Naive thymus-derived CD4-positive, alpha-beta T cell (primary cell): ENCODE measurements at regions of chr5 and their contacts with region 1.

Region 1: DNA sequence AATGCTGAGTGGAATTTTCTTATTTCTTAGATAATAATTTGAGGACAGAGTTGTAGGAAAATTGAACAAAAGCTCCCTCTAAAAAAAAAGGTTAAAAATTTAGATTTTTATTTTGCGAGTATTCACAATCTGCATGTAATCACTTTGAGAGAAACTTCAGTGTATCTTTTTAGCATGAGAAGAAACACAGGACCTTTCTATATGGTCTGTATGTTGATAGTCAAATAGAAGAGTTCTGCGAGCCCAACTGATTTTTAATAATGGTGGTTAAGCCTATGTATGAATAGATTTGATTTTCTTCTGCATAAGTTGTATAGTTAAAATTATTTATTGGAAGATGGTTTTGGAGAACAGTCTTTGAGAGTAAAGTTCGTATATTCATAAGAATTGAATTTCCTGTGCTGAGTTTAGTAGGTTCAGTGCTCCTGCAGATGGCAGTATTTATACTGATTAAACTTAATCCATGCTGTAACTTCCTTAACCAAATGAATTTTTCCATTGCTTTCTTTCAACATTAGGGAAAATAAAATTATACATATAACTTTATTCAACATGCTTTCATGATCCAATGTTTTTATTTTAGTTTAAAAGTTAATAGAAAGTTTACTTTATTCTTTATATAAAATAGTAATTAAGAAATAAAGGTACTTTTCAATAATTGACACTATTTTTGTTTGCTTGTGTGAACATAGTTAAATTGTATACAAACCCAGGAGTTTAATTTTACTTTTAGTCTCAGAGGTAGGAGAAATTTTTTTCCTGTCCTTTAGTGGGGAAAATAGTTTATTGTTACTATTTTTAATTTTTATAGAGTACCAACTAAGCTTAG is 19.6 kb downstream of the TCERG1 start:
- DNase-seq: no peak
- ATAC-seq: no peak
- H3K4me3 ChIP-seq: no peak overlapping the region
- H3K4me3 Mint-ChIP-seq: no peak overlapping the region
- H3K27ac ChIP-seq: no peak overlapping the region
- H3K27ac Mint-ChIP-seq: peak overlapping the region in 4 of 9 donors; percentile 19 to 60 (median 53)
- H3K4me1 ChIP-seq: no peaks in the 10 kb centered on the region
- H3K4me1 Mint-ChIP-seq: peaks cover 12 to 37% (median 24%) of the 10 kb centered on the region in 7 donors
- H3K27me3 ChIP-seq: no peaks in the 10 kb centered on the region
- H3K27me3 Mint-ChIP-seq: no peaks in the 10 kb centered on the region

Region 2: DNA sequence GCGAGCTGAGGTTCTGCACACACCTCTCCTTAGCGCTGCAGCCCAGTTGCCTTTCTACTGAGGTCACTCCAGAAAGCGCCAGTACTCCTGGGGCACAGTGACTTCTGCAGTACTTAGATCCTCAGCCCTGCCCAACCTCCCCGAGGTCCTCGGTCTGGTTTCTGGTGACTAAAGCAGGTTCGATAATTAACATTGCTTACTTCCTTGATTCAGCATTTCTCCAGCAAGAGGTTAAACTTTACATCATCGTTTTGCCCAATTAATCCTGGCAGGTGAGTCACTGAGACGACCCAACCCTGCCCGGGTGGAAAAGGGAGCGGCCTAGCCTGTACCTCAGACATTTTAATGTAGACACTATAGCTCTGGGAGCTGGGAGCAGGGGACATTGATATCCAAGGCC is 439.0 kb before region 1 on chr5:
- CTCF ChIA-PET with region 1: no interaction called
- POLR2A ChIA-PET with region 1: no interaction called
- intact Hi-C with region 1: no loop called
- DNase-seq: no peak
- ATAC-seq: no peak
- H3K4me3 ChIP-seq: no peak overlapping the region
- H3K4me3 Mint-ChIP-seq: no peak overlapping the region
- H3K27ac ChIP-seq: no peak overlapping the region
- H3K27ac Mint-ChIP-seq: no peak overlapping the region
- H3K4me1 ChIP-seq: no peaks in the 10 kb centered on the region
- H3K4me1 Mint-ChIP-seq: no peaks in the 10 kb centered on the region
- H3K27me3 ChIP-seq: no peaks in the 10 kb centered on the region
- H3K27me3 Mint-ChIP-seq: peaks cover 4 to 22% (median 10%) of the 10 kb centered on the region in 5 donors

Region 3: DNA sequence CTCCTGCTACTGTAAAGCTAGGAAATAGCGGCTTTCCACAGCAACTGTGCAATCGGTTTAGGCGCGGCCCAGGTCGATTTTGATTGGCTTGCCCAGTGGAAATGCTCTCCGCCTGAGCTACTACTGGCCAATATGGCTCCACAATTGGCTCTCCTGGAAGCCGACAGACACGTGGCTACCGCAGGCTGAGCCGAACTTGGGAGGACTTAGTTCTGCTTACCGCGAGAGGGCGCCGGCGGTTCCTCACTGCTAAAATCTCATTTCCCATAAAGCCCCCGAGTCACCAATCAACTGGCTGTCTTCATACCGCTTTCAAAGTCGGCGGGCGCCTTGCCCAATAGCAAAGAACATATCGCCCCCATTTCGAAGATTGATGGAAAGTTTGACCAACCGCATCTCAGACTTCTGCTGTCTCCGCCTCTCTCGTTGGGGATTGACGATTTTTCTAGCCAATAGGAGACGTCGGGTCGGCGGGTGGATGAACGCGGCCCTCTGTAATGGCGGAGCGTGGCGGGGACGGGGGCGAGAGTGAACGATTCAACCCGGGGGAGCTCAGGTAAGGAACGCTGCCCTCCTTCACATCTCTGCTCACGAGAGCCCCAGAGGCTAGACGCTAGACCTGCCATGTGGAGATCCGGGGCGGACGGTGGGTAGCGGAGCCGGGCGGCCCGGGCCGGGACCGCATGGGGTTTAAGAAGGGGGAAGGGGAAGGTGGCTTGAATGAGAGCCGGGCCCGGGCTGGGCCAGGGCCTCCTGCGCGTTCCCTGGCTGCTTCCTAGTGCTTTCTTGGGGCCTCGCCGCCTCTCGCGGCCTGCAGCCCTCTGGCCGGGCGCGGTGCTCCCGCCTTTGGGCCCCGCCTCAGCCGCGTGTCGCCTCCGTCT is 19.6 kb before region 1 on chr5 and contains the start of gene TCERG1:
- CTCF ChIA-PET with region 1: interaction called, 3 read pairs
- POLR2A ChIA-PET with region 1: interaction called, 3 read pairs
- intact Hi-C with region 1: loop called (anchors 2 kb)
- DNase-seq: peak; percentile 87 to 99 (median 98)
- ATAC-seq: peak; percentile 94
- H3K4me3 ChIP-seq: peak within 1 kb of the TSS; percentile 64
- H3K4me3 Mint-ChIP-seq: peak within 1 kb of the TSS; percentile 83 to 100 (median 99)
- H3K27ac ChIP-seq: peak within 1 kb of the TSS; percentile 96
- H3K27ac Mint-ChIP-seq: peak within 1 kb of the TSS; percentile 91 to 100 (median 97)
- H3K4me1 ChIP-seq: peaks cover 14 to 19% of the 10 kb centered on the region in 2 donors
- H3K4me1 Mint-ChIP-seq: peaks cover 24 to 51% (median 43%) of the 10 kb centered on the region in 7 donors
- H3K27me3 ChIP-seq: no peaks in the 10 kb centered on the region
- H3K27me3 Mint-ChIP-seq: peaks cover 0 to 10% (median 0%) of the 10 kb centered on the region in 5 donors
- total RNA-seq, gene TCERG1: 75.2 to 101 (median 83.8) TPM

Region 4: DNA sequence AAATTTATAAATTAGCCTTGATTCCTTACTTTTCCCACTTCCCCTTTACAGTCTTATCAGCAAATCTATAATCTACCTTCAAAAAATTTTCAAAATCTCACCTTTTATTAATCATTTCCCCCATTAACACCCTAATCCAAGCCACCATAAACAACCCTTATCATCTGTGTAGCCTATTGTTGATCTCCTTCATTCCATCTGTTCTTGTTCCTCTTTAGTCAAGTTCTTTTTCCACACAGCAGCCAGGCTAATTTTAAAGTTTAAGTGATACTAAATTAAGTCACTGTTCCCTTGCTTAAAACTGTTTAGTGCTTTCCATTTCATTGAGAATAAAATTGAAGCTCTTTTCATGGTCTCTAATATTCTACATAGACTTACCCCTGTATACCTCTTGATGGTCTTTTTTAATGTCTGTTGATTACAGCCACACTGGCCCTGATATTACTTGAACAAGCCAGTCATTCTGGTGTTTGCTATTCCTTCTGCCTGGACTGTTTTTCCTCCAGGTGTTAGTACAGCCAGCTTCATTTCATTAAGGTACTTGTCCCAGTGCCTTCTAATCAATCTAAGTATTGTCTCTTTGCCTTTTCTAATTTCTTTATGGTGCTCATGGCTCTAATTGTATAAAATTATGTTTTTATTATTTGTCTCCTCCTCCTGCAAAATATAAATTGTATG is 18.1 kb after region 1 on chr5:
- CTCF ChIA-PET with region 1: no interaction called
- POLR2A ChIA-PET with region 1: no interaction called
- intact Hi-C with region 1: loop called in 1 of 2 experiments (anchors 2 kb)
- DNase-seq: no peak
- ATAC-seq: no peak
- H3K4me3 ChIP-seq: no peak overlapping the region
- H3K4me3 Mint-ChIP-seq: no peak overlapping the region
- H3K27ac ChIP-seq: no peak overlapping the region
- H3K27ac Mint-ChIP-seq: no peak overlapping the region
- H3K4me1 ChIP-seq: no peaks in the 10 kb centered on the region
- H3K4me1 Mint-ChIP-seq: peaks cover 0 to 2% (median 0%) of the 10 kb centered on the region in 7 donors
- H3K27me3 ChIP-seq: no peaks in the 10 kb centered on the region
- H3K27me3 Mint-ChIP-seq: no peaks in the 10 kb centered on the region

Region 5: GRCh38 chr5:146507428-146507827 is 40.7 kb after region 1 on chr5:
- CTCF ChIA-PET with region 1: no interaction called
- POLR2A ChIA-PET with region 1: no interaction called
- intact Hi-C with region 1: loop called in 1 of 2 experiments (anchors 5 kb)
- DNase-seq: no peak
- ATAC-seq: no peak
- H3K4me3 ChIP-seq: no peak overlapping the region
- H3K4me3 Mint-ChIP-seq: no peak overlapping the region
- H3K27ac ChIP-seq: no peak overlapping the region
- H3K27ac Mint-ChIP-seq: peak overlapping the region in 2 of 9 donors; percentile 18 to 70
- H3K4me1 ChIP-seq: no peaks in the 10 kb centered on the region
- H3K4me1 Mint-ChIP-seq: no peaks in the 10 kb centered on the region
- H3K27me3 ChIP-seq: no peaks in the 10 kb centered on the region
- H3K27me3 Mint-ChIP-seq: no peaks in the 10 kb centered on the region